ENCODE measurements at regions of chr1 and their contacts with region 1.

Region 1: GRCh38 chr1:197327776-197328364 is 59.8 kb downstream of the CRB1 start:
- DNase-seq: no peak
- H3K4me3 Mint-ChIP-seq: no peak overlapping the region
- H3K27ac Mint-ChIP-seq: no peak overlapping the region
- H3K4me1 Mint-ChIP-seq: peaks cover 5% of the 10 kb centered on the region
- H3K27me3 Mint-ChIP-seq: peaks cover 5% of the 10 kb centered on the region

Region 2: GRCh38 chr1:197356723-197357533 is 29.1 kb after region 1 on chr1:
- intact Hi-C with region 1: loop called (anchors 1 kb)
- DNase-seq: no peak
- H3K4me3 Mint-ChIP-seq: no peak overlapping the region
- H3K27ac Mint-ChIP-seq: no peak overlapping the region
- H3K4me1 Mint-ChIP-seq: no peaks in the 10 kb centered on the region
- H3K27me3 Mint-ChIP-seq: no peaks in the 10 kb centered on the region

Measured in activated T-helper 1 cell treated with anti-CD3 and anti-CD28 coated beads, Interleukin-12 subunit alpha, Interleukin-12 subunit beta, Interleukin-2, Interleukin-4 antibody, amounts not matched to agents 30 ng/mL and 10 ng/mL and 1 ng/mL, durations not matched to agents 14 hours and 24 hours and 36 hours (primary cell).